ENCODE measurements at regions of chr15 and their contacts with region 1.

Region 1: GRCh38 chr15:43800286-43801141 is at the start of gene HYPK:
- DNase-seq: peak; percentile 88 to 99 (median 94)

Region 2: DNA sequence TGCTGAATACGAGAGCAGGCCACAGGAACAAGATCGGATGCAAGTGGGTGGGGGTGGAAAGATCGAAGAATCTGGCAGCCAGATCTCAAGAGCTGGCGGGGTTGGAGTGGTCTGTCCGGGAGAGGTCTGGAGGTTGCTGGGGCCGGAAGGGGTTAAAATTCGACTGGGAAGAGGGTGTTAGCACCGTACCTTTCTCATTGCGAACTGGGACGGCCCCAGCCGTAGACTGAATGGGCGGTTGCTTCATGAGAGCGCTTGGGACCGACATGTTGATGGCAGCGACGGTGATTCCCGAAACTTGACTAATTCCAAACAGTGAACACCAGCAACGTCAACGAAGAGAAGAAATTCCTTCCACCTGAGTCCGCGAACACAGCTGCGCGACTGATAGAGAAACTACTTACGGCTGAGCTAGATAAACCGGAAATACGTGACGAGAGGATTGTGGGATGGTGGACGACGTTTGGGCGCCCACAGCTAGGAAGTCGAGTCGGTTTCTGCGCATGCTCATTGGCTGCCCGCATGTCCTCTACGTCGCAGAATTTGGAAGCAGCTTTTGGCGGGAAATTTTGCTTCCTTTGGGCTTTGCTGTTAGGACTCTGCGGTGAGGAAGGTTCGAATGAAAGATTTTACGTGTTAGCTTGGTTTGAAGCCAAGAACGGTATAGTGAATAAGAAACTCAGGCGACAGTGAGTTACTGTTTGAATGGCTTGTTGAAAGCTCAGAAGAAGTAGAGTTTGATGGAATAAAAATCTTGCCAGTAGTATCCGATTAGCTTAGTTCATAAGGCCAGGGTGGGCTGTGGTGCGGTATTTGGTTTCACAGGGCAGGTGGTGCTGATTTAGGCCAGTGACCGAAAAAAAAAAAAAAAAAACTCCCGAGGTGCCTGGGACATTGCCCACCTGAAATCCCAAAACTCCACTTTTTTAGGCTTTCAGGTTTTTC is 24.1 kb after region 1 on chr15 and contains the start of gene MFAP1:
- intact Hi-C with region 1: loop called (anchors 1 kb)
- DNase-seq: peak; percentile 85 to 98 (median 92)